Heart right ventricle (tissue), 16 donors: ENCODE measurements at regions of chr10 and their contacts with region 1.

Region 1: GRCh38 chr10:62681211-62681940 is 123.1 kb upstream of the ADO start:
- DNase-seq: no peak
- ATAC-seq: peak in 1 of 8 donors; percentile 18
- H3K4me3 ChIP-seq: no peak overlapping the region
- H3K27ac ChIP-seq: no peak overlapping the region
- H3K4me1 ChIP-seq: peaks cover 0 to 12% (median 0%) of the 10 kb centered on the region in 9 donors
- H3K27me3 ChIP-seq: peaks cover 0 to 8% (median 0%) of the 10 kb centered on the region in 7 donors
- CTCF ChIP-seq: peak in 1 of 9 donors; percentile 13

Region 2: DNA sequence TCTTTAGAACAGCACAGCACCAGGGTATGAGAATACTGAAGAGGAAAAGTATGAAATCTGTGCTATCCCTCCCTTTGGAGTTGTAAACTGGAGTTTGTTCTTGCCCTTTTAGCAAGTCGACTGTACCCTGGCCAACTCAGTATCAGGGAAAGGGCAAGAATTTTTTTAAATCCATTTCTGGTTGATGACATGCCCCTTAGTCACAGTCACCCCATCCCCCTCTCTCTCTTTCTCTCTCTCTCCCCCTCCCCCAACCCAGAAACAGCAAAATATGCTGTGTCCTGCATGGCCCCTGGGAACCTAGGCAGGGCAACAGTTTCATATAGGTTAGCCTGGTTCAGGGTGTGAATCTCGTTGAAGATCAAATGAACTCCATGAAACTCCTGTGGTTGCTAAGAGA is 54.6 kb before region 1 on chr10:
- intact Hi-C with region 1: loop called in 1 of 10 experiments (anchors 10 kb)
- DNase-seq: no peak
- ATAC-seq: no peak
- H3K4me3 ChIP-seq: no peak overlapping the region
- H3K27ac ChIP-seq: no peak overlapping the region
- H3K4me1 ChIP-seq: peaks cover 0 to 15% (median under 1%) of the 10 kb centered on the region in 9 donors
- H3K27me3 ChIP-seq: no peaks in the 10 kb centered on the region
- CTCF ChIP-seq: no peak

Region 3: GRCh38 chr10:63093227-63093626 is 411.9 kb after region 1 on chr10:
- intact Hi-C with region 1: no loop called
- DNase-seq: no peak
- ATAC-seq: no peak
- H3K4me3 ChIP-seq: no peak overlapping the region
- H3K27ac ChIP-seq: no peak overlapping the region
- H3K4me1 ChIP-seq: no peaks in the 10 kb centered on the region
- H3K27me3 ChIP-seq: no peaks in the 10 kb centered on the region
- CTCF ChIP-seq: no peak